ENCODE measurements at regions of chr17 and their contacts with region 1.

Region 1: DNA sequence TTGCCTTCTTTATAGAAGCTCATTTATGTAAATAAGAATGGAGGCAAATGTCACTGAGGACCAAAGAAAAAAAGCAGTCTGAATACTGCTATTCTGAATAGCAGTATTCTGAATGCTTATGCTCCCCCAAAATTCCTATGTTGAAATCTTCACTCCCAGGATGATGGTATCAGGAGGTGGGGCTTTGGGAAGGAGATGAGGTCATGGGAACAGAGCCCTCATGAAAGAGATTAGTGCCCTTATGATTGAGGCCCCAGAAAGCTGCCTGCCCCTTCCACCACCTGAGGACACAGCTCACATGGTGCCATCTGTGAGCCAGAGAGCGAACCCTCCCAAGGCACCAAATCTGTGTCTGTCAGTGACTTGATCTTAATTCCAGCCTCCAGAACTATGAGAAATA is 28.8 kb downstream of the HEATR6 start:
- DNase-seq: no peak
- ATAC-seq: no peak
- H3K4me3 ChIP-seq: no peak overlapping the region
- H3K27ac ChIP-seq: no peak overlapping the region
- H3K4me1 ChIP-seq: no peaks in the 10 kb centered on the region
- H3K27me3 ChIP-seq: no peaks in the 10 kb centered on the region
- CTCF ChIP-seq: no peak

Region 2: GRCh38 chr17:59746849-59747445 is 303.0 kb before region 1 on chr17:
- intact Hi-C with region 1: loop called in 2 of 10 experiments (anchors 10 kb)
- DNase-seq: no peak
- ATAC-seq: peak in 2 of 8 donors; percentile 16 to 42
- H3K4me3 ChIP-seq: no peak overlapping the region
- H3K27ac ChIP-seq: no peak overlapping the region
- H3K4me1 ChIP-seq: peaks cover 0 to 11% (median 0%) of the 10 kb centered on the region in 9 donors
- H3K27me3 ChIP-seq: no peaks in the 10 kb centered on the region
- CTCF ChIP-seq: peak; percentile 14 to 77 (median 67)

Region 3: DNA sequence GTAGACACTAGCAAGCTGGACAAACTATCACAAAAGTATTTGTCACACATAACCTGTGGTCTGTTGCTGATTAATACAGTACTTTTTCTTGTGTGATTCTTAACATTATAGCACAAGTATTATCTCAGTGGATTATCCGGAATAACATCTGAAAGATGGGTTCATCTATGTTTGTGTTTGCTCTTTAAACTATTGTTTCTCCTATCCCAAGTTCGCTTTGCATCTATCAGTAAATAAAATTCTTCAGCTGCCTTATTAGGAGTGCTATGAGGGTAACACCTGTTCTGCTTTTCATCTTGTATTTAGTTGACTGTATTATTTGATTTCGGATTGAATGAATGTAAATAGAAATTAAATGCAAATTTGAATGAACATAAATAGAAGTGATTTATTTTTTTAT is 99.9 kb before region 1 on chr17:
- intact Hi-C with region 1: loop called in 1 of 10 experiments (anchors 10 kb)
- DNase-seq: no peak
- ATAC-seq: no peak
- H3K4me3 ChIP-seq: no peak overlapping the region
- H3K27ac ChIP-seq: no peak overlapping the region
- H3K4me1 ChIP-seq: no peaks in the 10 kb centered on the region
- H3K27me3 ChIP-seq: no peaks in the 10 kb centered on the region
- CTCF ChIP-seq: no peak

Region 4: DNA sequence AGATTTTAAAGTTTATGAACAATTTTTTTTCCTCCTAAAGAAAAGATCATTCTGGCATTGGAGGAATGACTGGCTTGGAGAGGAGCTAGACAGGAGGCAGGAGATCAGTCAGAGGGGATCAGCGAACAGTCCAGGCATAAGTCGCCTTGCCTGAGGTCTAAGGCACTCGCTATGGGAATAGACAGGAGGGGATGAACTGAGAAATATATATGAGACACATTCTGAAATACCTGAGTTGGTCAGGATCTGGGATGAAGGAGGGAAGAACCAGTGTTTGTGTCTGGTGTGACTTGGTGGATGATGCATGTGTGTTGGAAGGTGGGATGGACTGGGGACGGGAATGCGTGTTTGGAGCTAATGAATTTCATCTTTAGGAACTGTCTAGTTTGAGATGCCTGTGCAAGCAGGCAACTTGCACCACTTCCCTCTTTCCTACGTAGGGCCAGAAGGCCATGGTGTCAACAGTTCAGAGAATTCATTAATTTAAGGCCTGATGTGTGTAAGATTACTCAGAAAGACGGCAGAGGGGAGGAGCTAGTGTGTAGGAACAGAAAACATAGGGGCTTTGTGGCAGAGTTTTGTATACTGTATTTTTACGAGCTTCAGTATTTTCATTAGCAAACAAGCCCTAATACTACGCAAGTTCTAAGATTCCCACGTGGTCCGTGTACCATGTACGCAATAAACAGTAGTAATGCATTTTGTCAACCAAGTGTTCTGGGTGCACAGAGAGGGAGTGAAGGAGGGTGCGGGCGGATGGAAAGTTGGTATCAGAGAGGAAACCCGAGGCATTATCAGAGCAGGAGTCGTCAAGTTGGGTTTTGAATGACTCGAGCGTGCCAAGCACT is 28.0 kb after region 1 on chr17:
- intact Hi-C with region 1: no loop called
- DNase-seq: no peak
- ATAC-seq: peak; percentile 5 to 45 (median 29)
- H3K4me3 ChIP-seq: peak overlapping the region; percentile 51 to 98 (median 79)
- H3K27ac ChIP-seq: peak overlapping the region; percentile 38 to 88 (median 80)
- H3K4me1 ChIP-seq: peaks cover 0 to 38% (median 25%) of the 10 kb centered on the region in 9 donors
- H3K27me3 ChIP-seq: no peaks in the 10 kb centered on the region
- CTCF ChIP-seq: no peak